Aorta (tissue), 5 donors: ENCODE measurements at regions of chr20 and their contacts with region 1.

Region 1: GRCh38 chr20:6074145-6074561 is 20.3 kb upstream of the LRRN4 start:
- DNase-seq: no peak
- ATAC-seq: no peak
- H3K4me3 ChIP-seq: no peak overlapping the region
- H3K27ac ChIP-seq: no peak overlapping the region
- H3K4me1 ChIP-seq: no peaks in the 10 kb centered on the region
- H3K27me3 ChIP-seq: no peaks in the 10 kb centered on the region

Region 2: DNA sequence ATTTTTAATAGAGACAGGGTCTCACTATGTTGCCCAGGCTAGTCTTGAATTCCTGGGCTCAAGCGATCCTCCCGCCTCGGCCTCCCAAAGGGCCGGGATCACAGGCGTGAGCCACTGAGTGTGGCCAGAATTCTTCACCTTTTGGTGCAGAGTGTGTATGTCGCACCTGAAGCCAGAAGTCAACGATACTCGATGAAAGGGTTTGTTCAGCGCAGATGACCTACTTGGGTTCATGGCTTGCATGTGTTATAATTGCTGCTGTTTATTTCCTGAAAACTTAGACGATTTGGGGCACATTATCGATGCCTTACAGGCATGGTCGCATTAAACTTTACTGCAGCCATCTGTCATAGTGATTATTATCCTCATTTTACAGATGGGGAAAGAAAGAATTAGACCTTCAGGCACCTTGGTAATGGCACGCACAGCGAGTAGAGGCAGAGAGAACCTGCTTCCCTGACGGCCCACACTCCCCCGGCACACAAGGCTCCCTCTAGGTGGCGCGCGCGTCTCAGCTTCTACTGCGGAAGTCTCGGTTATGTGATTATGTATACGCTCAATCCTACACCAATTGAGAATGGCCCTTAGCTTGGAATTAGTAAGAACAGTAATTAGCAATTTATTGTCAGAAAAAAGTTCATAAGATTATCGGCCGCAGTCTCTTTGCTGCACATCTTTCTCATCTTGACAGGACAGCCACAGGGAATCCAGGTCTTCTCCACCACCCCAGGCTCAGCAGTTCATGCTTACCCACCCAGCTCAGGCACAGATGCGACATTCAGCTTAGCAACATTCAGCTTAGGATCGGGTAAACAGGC is 544.6 kb before region 1 on chr20:
- intact Hi-C with region 1: loop called in 1 of 2 experiments (anchors 5 kb)
- DNase-seq: peak; percentile 88 to 95
- ATAC-seq: peak; percentile 95
- H3K4me3 ChIP-seq: no peak overlapping the region
- H3K27ac ChIP-seq: no peak overlapping the region
- H3K4me1 ChIP-seq: no peaks in the 10 kb centered on the region
- H3K27me3 ChIP-seq: no peaks in the 10 kb centered on the region

Region 3: GRCh38 chr20:5788385-5788895 is 285.7 kb before region 1 on chr20:
- intact Hi-C with region 1: loop called (anchors 5 to 10 kb)
- DNase-seq: peak; percentile 81 to 82
- ATAC-seq: peak; percentile 92
- H3K4me3 ChIP-seq: no peak overlapping the region
- H3K27ac ChIP-seq: no peak overlapping the region
- H3K4me1 ChIP-seq: no peaks in the 10 kb centered on the region
- H3K27me3 ChIP-seq: no peaks in the 10 kb centered on the region

Region 4: GRCh38 chr20:5928836-5929715 is 145.1 kb before region 1 on chr20:
- intact Hi-C with region 1: no loop called
- DNase-seq: no peak
- ATAC-seq: no peak
- H3K4me3 ChIP-seq: no peak overlapping the region
- H3K27ac ChIP-seq: no peak overlapping the region
- H3K4me1 ChIP-seq: no peaks in the 10 kb centered on the region
- H3K27me3 ChIP-seq: no peaks in the 10 kb centered on the region

Region 5: DNA sequence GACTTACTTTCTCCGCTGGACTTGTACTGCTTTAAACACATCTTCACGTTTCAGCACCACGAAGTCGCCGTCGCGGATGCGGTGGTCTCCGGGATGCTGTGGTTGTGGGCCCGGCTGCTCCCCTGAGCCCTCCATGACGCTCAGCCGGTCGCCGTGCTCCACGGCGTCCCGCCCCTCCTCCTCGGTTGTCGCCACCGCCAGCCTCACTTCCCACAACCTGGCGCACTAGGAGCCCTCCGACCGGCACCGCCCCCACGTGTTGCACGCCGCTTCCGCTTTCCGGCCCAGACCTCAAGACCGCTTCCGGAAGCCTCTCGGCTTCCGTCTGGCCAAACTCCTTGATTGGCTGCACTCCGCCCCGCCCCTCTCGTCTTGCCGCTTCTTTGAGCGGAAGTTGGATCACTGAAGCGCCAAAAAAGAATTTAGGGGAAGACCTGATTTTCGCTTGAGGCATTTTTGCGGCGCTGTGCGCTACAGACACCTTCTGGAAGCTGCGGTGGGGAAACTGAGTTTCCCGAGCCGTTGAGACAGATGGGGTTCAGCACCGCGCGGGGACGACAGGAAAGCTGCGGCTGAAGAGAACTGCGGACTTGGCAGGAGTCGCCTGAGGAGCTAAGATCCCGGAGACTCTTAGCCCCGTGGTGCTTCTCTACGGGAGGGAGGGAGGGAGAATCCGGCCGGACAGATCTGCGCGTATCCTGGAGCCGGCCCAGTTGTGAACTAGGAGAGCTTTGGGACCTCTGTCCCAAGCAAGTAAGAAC is 123.7 kb before region 1 on chr20 and contains the starts of genes MCM8 and TRMT6:
- intact Hi-C with region 1: loop called in 1 of 2 experiments (anchors 5 kb)
- DNase-seq: peak; percentile 98 to 99
- ATAC-seq: peak; percentile 100
- H3K4me3 ChIP-seq: peak within 1 kb of the TSS; percentile 73 to 77
- H3K27ac ChIP-seq: peak within 1 kb of the TSS in 1 of 2 donors; percentile 65
- H3K4me1 ChIP-seq: no peaks in the 10 kb centered on the region
- H3K27me3 ChIP-seq: no peaks in the 10 kb centered on the region
- total RNA-seq, gene MCM8: 4.7 TPM
- total RNA-seq, gene TRMT6: 8.9 to 11.0 TPM

Region 6: GRCh38 chr20:6044115-6044514 is 30.0 kb before region 1 on chr20:
- intact Hi-C with region 1: no loop called
- DNase-seq: no peak
- ATAC-seq: no peak
- H3K4me3 ChIP-seq: no peak overlapping the region
- H3K27ac ChIP-seq: no peak overlapping the region
- H3K4me1 ChIP-seq: no peaks in the 10 kb centered on the region
- H3K27me3 ChIP-seq: no peaks in the 10 kb centered on the region